ENCODE measurements at regions of chr6 and their contacts with region 1.

Region 1: DNA sequence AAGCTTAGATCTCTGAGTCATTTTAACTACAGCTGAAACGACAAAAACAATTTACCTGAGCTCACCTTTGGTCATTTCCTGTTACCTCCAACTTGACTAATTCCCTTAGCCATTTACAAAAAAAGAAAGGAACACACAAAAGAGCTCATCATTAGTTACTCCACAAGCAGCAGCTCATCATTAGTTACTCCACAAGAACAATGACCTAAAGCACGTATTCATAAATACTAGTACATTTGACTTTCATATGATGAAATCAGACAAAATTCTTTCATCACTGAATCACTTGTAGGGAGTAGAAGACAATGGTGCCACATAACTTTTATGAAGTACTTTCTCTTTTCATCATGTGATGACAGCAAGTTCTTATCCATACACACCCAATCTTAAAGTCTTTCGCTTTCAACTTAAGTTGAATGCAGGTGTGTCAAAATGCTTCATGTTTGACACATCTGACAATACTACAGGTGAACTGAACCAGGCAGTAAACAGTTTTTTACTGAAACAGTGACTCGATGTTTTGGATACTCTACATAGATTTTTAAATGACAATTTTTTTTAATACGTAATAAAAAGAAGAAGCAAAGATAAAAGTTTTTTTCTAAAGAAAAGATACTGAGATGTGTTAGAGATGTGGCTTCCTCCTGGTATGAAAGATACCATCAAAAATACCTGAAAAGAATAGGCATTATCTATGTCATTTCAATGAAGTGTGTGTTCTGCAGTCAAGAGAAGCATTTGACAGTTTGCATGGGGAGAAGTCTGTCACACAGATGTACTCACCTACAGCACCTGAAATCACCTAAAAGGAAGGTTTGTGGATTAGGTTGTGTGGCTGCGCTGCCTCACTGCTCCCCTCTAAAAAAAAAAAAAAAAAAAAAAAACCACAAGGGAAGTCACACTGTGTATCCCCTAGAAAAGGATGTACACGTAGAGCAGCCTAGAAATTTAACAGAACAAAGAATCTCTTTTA is 109.1 kb downstream of the PRDM1 start:
- DNase-seq: peak; percentile 71
- H3K4me3 Mint-ChIP-seq: peak overlapping the region; percentile 69
- H3K27ac Mint-ChIP-seq: peak overlapping the region; percentile 82
- H3K4me1 Mint-ChIP-seq: peaks cover 40% of the 10 kb centered on the region
- H3K27me3 Mint-ChIP-seq: no peaks in the 10 kb centered on the region

Region 2: DNA sequence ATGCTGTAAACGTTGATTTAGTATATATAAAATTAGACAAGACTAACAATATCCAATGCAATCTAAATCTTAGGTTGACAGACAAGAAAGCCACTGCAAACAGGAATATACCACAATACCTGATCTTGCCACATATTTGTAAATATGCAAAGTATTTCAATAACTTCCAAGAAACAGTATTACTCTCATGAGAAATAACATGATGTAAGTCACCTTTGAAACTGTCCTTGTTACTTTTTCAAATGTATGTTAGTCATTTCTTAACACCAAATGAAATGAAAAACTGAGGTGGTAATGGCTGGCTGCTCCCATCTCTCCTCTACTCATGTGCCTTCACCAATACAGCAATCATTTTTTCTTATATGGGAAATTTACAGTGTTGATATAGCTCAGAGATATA is 11.7 kb after region 1 on chr6:
- intact Hi-C with region 1: loop called (anchors 2 kb)
- DNase-seq: no peak
- H3K4me3 Mint-ChIP-seq: no peak overlapping the region
- H3K27ac Mint-ChIP-seq: no peak overlapping the region
- H3K4me1 Mint-ChIP-seq: peaks cover 14% of the 10 kb centered on the region
- H3K27me3 Mint-ChIP-seq: no peaks in the 10 kb centered on the region

Region 3: GRCh38 chr6:106339334-106340029 is 144.2 kb after region 1 on chr6:
- intact Hi-C with region 1: no loop called
- DNase-seq: peak; percentile 82
- H3K4me3 Mint-ChIP-seq: no peak overlapping the region
- H3K27ac Mint-ChIP-seq: no peak overlapping the region
- H3K4me1 Mint-ChIP-seq: peaks cover 5% of the 10 kb centered on the region
- H3K27me3 Mint-ChIP-seq: peaks cover 29% of the 10 kb centered on the region

Region 4: DNA sequence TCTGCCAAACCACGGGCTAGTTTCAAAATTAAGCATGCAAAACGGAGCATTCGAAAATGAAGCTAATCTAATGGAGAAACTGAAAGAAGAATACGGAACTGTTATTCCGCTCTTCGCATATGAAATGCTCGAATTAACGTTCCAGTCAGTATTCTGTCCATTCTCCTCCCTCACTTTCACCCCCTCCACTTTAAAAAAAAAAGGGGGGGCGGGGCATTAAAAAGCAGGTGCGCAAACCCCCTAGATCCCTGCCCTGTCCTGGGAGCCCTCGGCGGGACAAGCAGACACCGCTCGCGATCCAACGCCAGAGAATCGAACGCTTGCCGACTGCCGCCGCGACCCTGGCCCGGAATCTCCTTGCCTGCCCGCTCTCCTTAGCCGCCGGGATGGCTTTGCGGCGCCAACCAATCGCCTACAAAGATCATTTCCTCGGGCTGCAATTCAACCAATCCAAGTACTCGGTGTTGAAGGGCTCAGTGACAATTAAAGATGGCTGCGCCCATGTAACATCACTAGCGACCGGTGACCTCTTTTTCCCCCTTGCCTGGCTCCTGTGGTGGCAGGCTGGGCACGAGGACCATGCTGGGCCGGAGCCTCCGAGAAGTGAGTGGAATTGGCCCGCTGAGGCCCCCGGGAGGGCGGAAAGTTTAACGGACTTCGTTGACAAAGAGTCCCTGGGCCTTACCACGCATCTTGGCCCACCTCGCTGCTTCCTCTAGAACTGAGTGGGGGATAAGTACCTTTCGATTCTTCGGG is 434.0 kb after region 1 on chr6 and contains the starts of genes QRSL1 and RTN4IP1:
- intact Hi-C with region 1: no loop called
- DNase-seq: peak; percentile 95
- H3K4me3 Mint-ChIP-seq: peak within 1 kb of the TSS; percentile 92
- H3K27ac Mint-ChIP-seq: peak within 1 kb of the TSS; percentile 97
- H3K4me1 Mint-ChIP-seq: peaks cover 18% of the 10 kb centered on the region
- H3K27me3 Mint-ChIP-seq: no peaks in the 10 kb centered on the region
- total RNA-seq, gene QRSL1: 22.4 and 24.2 TPM in 2 replicates
- total RNA-seq, gene RTN4IP1: 7.2 and 8.0 TPM in 2 replicates